H1 (cell line): ENCODE measurements at regions of chr11 and their contacts with region 1.

Region 1: GRCh38 chr11:128157423-128158298 is 429.7 kb downstream of the ETS1 start:
- DNase-seq: peak in 1 of 2 experiments; percentile 76
- H3K4me3 ChIP-seq: peak overlapping the region in 2 of 4 experiments; percentile 19 to 45; a peak in 4 of 8 replicates
- H3K27ac ChIP-seq: no peak overlapping the region
- H3K4me1 ChIP-seq: no peaks in the 10 kb centered on the region
- H3K27me3 ChIP-seq: no peaks in the 10 kb centered on the region
- CTCF ChIP-seq: peak in 2 of 3 experiments; percentile 67 to 68; a peak in 3 of 4 replicates
- EP300 ChIP-seq: no peak
- POLR2A ChIP-seq: no peak
- RAD21 ChIP-seq: peak; percentile 70 to 71

Region 2: DNA sequence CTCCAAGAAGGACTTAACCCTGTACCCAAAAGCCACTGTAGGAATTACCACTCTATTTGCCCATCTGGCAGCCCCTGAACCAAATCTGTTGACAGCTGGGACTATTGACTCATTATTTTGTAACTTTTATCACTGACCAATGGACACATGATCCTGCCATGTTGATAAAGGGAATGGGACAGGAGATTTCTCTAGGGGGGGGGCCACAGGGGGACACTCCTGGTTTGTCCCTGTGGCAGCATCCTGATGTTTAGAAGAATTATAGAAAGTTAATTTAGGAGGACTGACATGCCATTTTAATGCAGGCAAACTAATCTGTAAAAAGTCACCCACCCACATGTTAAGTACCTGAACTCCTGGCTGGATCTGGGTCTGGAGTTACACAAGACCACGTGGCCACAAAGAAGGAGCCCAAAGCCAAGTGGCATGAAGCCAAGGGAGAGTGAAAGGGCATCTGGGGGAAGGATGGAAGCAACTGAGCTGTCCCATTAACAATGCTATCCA is 128.4 kb before region 1 on chr11:
- CTCF ChIA-PET with region 1: interaction called, 19 read pairs
- POLR2A ChIA-PET with region 1: no interaction called
- DNase-seq: no peak
- H3K4me3 ChIP-seq: no peak overlapping the region
- H3K27ac ChIP-seq: no peak overlapping the region
- H3K4me1 ChIP-seq: no peaks in the 10 kb centered on the region
- H3K27me3 ChIP-seq: peaks cover 0 to 1% (median 0%) of the 10 kb centered on the region in 4 experiments; a peak in 1 of 7 replicates
- CTCF ChIP-seq: no peak
- EP300 ChIP-seq: no peak
- POLR2A ChIP-seq: no peak
- RAD21 ChIP-seq: no peak

Region 3: GRCh38 chr11:128103278-128103873 is 54.3 kb before region 1 on chr11:
- CTCF ChIA-PET with region 1: interaction called, 16 read pairs
- POLR2A ChIA-PET with region 1: no interaction called
- DNase-seq: no peak
- H3K4me3 ChIP-seq: no peak overlapping the region
- H3K27ac ChIP-seq: no peak overlapping the region
- H3K4me1 ChIP-seq: peaks cover 0 to 2% (median 0%) of the 10 kb centered on the region in 4 experiments; a peak in 2 of 7 replicates
- H3K27me3 ChIP-seq: no peaks in the 10 kb centered on the region
- CTCF ChIP-seq: no peak
- EP300 ChIP-seq: no peak
- POLR2A ChIP-seq: no peak
- RAD21 ChIP-seq: no peak

Region 4: DNA sequence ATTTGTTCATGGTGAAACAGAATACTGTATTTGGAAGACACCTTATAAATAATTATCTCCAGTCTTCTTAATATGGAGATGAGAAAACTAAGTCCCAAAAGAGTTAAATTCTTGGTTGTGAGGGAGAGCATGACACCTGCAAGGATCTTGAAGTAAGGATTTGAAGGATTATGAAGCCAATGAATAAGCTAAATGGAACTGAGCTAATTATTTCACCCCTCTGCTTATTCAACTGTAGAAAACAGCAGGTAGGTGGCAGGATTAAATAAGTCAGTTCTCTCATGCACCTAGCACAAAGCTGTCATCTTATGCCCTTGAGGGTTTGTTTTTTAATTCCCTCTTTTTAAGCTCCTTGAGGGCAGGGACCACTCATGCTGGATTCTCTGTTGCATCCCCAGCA is 27.6 kb before region 1 on chr11:
- CTCF ChIA-PET with region 1: interaction called, 20 read pairs
- POLR2A ChIA-PET with region 1: no interaction called
- DNase-seq: no peak
- H3K4me3 ChIP-seq: no peak overlapping the region
- H3K27ac ChIP-seq: no peak overlapping the region
- H3K4me1 ChIP-seq: 0 out of 7 replicates have a peak, but pooled peaks cover 0 to 3% (median 1%) of the 10 kb centered on the region in 4 experiments
- H3K27me3 ChIP-seq: no peaks in the 10 kb centered on the region
- CTCF ChIP-seq: no peak
- EP300 ChIP-seq: no peak
- POLR2A ChIP-seq: no peak
- RAD21 ChIP-seq: no peak

Region 5: DNA sequence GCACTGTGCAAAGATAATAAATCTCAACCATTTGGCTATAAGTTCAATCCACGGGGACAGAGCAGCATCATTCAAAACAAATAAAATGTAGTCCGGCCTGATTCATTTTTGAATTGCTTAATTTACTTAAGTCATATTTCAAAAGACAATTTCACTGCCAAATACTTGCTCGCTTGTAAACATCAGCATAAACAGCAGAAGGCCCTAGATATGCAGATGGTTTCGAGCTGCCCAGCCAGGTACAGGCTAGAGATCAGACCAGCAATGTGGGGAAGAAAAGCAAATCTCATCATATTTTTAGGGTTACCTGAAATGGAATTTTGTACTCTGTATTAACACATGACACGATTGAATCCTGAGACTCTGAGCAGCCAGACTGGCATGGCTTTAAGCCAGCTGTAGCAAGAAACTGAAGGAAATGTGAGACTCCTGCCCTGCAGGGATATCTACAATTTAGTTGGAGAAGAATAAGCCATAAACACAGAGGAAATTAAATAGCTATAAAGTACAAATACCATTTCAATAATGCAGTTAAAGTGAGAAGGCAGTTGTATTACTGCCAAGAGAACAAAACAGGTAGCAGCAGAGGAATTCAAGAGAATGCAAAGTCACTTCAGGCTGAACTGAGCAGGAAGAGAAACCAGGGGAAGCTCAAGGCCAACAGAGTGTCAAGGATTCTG is 10.6 kb before region 1 on chr11:
- CTCF ChIA-PET with region 1: interaction called, 45 read pairs
- POLR2A ChIA-PET with region 1: no interaction called
- DNase-seq: no peak
- H3K4me3 ChIP-seq: no peak overlapping the region
- H3K27ac ChIP-seq: no peak overlapping the region
- H3K4me1 ChIP-seq: peaks cover 0 to 2% (median 0%) of the 10 kb centered on the region in 4 experiments; a peak in 2 of 7 replicates
- H3K27me3 ChIP-seq: no peaks in the 10 kb centered on the region
- CTCF ChIP-seq: no peak
- EP300 ChIP-seq: no peak
- POLR2A ChIP-seq: no peak
- RAD21 ChIP-seq: no peak

Region 6: GRCh38 chr11:128279866-128280265 is 122.2 kb after region 1 on chr11:
- CTCF ChIA-PET with region 1: interaction called, 15 read pairs
- POLR2A ChIA-PET with region 1: no interaction called
- DNase-seq: no peak
- H3K4me3 ChIP-seq: no peak overlapping the region
- H3K27ac ChIP-seq: no peak overlapping the region
- H3K4me1 ChIP-seq: no peaks in the 10 kb centered on the region
- H3K27me3 ChIP-seq: no peaks in the 10 kb centered on the region
- CTCF ChIP-seq: no peak
- EP300 ChIP-seq: no peak
- POLR2A ChIP-seq: no peak
- RAD21 ChIP-seq: no peak

Region 7: DNA sequence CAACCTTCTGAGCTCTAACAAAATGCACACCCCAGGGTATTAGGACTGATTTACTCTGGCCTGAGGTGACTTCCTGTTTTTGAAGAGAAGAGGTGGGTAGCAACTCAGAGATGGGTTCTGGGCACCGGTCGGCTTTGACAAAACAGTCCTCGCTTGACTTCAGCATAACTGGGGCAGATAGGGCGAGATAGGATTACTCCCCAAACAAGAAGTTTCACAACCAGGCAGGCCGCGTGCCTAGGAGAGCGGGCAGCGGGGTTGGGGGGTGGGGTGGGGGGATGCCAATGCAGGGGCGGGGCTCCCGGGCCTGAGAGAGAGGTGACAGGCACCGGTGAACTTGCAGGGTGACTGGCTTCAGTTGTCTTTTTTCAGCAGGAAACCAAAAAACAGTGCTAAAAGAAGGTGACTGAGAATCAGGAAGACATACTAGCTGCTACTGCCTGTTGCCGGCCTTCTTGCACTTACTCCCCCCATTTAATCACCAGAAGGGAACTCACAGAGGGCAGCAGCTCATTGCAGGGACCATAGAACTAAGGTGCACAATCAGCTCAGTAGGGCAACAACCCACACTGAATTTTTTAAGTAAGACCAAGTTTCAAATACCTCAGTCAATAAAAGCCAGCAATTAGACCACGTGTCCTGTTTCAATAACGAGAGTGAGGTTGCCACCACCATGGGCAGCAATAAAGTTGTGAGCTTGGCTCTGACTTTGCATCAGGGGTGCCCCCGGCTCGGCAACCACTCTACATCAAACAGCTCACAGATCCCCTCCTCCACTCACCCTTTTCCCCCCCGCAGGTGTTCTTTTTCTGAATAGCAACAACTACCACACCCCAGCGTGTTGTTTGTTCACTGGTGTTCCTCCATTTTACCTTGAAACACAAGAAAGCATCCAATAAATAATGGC is 466.9 kb after region 1 on chr11:
- CTCF ChIA-PET with region 1: interaction called, 22 read pairs
- POLR2A ChIA-PET with region 1: no interaction called
- DNase-seq: peak in 1 of 2 experiments; percentile 43
- H3K4me3 ChIP-seq: no peak overlapping the region
- H3K27ac ChIP-seq: no peak overlapping the region
- H3K4me1 ChIP-seq: peaks cover 2 to 8% (median 3%) of the 10 kb centered on the region in 4 experiments; a peak in 6 of 7 replicates
- H3K27me3 ChIP-seq: peaks cover 0 to 3% (median 0%) of the 10 kb centered on the region in 4 experiments; a peak in 4 of 7 replicates
- CTCF ChIP-seq: no peak
- EP300 ChIP-seq: no peak
- POLR2A ChIP-seq: no peak
- RAD21 ChIP-seq: no peak